GM10248 (cell line): ENCODE measurements at regions of chr19 and their contacts with region 1.

Region 1: GRCh38 chr19:8412783-8413628 is at the start of gene MARCHF2:
- DNase-seq: peak; percentile 100
- CTCF ChIP-seq: peak; percentile 55

Region 2: GRCh38 chr19:8396563-8397203 is 16.3 kb before region 1 on chr19:
- CTCF ChIA-PET with region 1: interaction called, 19 read pairs
- POLR2A ChIA-PET with region 1: interaction called, 6 read pairs
- DNase-seq: peak; percentile 81
- CTCF ChIP-seq: peak; percentile 63

Region 3: GRCh38 chr19:8430650-8431049 is 17.6 kb after region 1 on chr19:
- CTCF ChIA-PET with region 1: interaction called, 23 read pairs
- POLR2A ChIA-PET with region 1: no interaction called
- DNase-seq: no peak
- CTCF ChIP-seq: no peak

Region 4: DNA sequence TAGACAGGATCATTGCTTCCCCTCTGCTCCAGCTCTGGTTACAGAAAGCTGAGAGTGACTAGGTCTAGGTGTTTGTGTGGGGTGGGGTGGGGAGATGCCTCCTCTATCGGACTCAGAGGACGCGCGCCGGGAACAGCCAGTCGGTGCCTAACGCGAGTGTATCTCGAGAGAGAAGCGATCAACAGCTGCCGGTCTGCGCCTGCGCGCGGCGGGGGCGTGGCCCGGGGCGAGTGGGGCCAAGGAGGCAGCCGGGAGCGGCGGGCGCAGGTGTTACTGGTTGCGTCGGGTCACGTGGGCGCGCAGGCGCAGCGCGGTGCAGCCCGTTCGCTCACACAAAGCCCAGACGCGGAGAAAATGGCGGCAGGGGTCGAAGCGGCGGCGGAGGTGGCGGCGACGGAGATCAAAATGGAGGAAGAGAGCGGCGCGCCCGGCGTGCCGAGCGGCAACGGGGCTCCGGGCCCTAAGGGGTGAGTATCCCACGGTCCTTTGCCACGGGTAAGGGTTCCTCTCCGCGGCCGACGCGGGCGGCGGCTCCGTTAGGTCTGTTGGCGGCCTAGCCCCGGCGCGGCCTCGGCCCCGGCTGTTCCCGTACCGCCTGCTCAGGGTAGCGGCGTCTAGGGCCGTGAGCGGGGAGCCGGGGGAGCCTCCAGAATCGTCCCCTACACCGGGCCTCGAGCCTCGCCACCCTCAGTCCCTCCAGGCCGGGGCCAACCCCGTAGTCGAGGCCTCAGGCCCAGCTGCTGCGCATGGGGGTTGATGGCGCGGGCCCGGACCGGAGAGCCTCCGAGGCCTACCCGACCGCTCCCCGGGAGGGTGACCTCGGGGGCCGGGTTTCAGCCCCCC is 31.9 kb after region 1 on chr19 and contains the start of gene HNRNPM:
- CTCF ChIA-PET with region 1: interaction called, 14 read pairs
- POLR2A ChIA-PET with region 1: interaction called, 7 read pairs
- DNase-seq: peak; percentile 100
- CTCF ChIP-seq: no peak

Region 5: GRCh38 chr19:8513687-8514504 is 100.9 kb after region 1 on chr19 and contains the start of gene ZNF414:
- CTCF ChIA-PET with region 1: interaction called, 10 read pairs
- POLR2A ChIA-PET with region 1: no interaction called
- DNase-seq: peak; percentile 99
- CTCF ChIP-seq: no peak